ENCODE measurements at regions of chr14 and their contacts with region 1.

Region 1: DNA sequence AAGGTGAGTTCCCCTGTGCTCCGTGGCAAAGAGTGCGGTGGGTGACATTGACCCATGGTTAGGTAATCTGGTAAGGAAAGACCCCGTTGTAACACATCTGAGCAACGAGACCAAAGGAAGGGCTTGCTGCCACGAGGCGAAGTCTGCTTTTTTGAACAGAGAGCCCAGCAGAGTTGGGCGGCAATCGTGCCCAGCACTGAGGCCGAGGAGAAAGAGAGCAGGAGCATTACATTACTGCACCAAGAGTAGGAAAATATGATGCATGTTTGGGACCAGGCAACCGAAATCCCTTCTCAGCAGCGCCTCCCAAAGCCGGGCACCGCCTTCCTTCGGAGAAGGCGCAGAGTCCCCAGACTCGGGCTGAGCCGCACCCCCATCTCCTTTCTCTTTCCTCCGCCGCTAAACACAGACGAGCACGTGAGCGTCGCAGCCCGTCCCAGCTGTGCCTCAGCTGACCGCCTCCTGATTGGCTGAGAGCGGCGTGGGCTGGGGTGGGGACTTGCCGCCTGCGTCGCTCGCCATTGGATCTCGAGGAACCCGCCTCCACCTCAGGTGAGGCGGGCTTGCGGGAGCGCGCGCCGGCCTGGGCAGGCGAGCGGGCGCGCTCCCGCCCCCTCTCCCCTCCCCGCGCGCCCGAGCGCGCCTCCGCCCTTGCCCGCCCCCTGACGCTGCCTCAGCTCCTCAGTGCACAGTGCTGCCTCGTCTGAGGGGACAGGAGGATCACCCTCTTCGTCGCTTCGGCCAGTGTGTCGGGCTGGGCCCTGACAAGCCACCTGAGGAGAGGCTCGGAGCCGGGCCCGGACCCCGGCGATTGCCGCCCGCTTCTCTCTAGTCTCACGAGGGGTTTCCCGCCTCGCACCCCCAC is at the start of gene HIF1A:
- DNase-seq: peak; percentile 98
- H3K4me3 ChIP-seq: peak within 1 kb of the TSS; percentile 85
- H3K27ac ChIP-seq: peak within 1 kb of the TSS; percentile 93
- H3K4me1 ChIP-seq: peaks cover 28% of the 10 kb centered on the region
- H3K27me3 ChIP-seq: no peaks in the 10 kb centered on the region
- CTCF ChIP-seq: no peak
- total RNA-seq, gene HIF1A: 146 and 154 TPM in 2 replicates

Region 2: GRCh38 chr14:61512026-61512834 is 182.8 kb before region 1 on chr14:
- CTCF ChIA-PET with region 1: no interaction called
- POLR2A ChIA-PET with region 1: no interaction called
- intact Hi-C with region 1: loop called (anchors 1 kb)
- DNase-seq: peak in 1 of 2 experiments; percentile 24
- H3K4me3 ChIP-seq: no peak overlapping the region
- H3K27ac ChIP-seq: peak overlapping the region; percentile 30
- H3K4me1 ChIP-seq: peaks cover 54% of the 10 kb centered on the region
- H3K27me3 ChIP-seq: no peaks in the 10 kb centered on the region
- CTCF ChIP-seq: no peak

Region 3: DNA sequence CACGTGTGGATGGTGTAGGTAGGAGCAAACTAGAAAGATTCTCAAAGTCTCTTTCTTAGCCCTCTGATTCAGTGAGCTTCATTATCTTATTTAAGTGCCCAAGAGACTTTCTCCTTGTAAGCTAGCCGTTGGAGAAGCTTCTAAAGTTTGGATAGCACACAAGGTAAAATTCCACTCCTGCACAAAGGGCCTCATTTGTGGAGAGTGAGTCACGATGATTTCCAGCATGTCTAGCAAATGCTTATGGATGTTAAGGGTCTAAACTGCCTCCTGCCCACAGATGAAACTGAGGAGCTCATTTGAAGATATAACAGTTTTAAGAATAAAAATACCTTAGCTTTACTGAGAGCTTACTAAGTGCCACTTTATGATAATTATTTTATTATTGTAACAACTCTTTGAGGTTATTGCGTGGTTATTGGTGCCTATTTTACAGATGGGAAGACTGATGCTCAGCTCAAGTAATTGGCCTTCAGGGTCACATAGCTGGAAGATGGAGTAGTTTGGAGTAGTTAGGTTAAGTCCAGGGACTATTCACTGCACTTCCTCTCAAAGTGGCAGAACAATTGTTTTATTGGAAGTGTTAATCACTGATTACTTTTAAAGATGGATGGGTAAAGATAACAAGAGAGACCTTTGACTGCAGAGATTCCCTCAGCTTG is 78.4 kb before region 1 on chr14:
- CTCF ChIA-PET with region 1: no interaction called
- POLR2A ChIA-PET with region 1: no interaction called
- intact Hi-C with region 1: loop called (anchors 1 kb)
- DNase-seq: peak in 1 of 2 experiments; percentile 83
- H3K4me3 ChIP-seq: no peak overlapping the region
- H3K27ac ChIP-seq: peak overlapping the region; percentile 74
- H3K4me1 ChIP-seq: peaks cover 37% of the 10 kb centered on the region
- H3K27me3 ChIP-seq: no peaks in the 10 kb centered on the region
- CTCF ChIP-seq: no peak

Region 4: DNA sequence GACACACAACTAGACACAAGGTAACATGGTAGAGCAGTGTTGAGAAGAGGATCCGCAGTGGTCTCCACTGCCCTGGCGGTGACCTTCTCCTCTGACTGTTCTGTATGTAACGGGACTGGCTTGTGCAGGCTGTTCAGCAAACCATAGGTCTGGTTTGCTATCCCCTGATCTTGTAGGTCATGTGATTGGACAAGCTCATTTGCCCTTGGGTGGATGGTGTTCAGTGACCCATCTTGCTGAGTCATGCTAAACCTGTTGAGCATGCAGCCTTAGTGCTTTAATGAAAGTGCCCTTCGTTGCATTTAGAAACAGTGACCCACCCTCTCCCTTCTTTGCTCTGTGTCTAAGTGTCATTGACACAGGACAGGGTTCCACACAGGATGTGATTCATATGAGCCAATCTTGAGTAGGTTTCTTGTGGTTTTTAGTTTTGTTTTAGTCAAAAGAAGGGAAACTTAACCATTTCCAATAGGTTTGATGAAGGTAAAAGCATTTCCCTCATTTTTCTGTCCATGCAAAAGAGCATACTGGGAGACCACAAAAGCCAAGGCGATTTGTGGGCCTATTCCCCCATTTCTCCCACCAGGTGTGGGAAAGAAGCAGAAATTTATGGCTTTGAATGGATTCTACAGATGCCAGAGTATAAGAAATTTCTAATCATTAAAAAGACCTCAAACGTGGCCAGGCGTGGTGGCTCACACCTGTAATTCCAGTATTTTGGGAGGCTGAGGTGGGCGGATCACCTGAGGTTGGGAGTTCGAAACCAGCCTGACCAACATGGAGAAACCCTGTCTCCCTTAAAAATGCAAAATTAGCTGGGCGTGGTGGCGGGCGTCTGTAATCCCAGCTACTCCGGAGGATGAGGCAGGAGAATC is 32.4 kb before region 1 on chr14:
- CTCF ChIA-PET with region 1: no interaction called
- POLR2A ChIA-PET with region 1: no interaction called
- intact Hi-C with region 1: loop called (anchors 1 kb)
- DNase-seq: peak; percentile 69 to 90
- H3K4me3 ChIP-seq: peak overlapping the region; percentile 3; the same call in 1 of the 2 replicates
- H3K27ac ChIP-seq: peak overlapping the region; percentile 91
- H3K4me1 ChIP-seq: peaks cover 68% of the 10 kb centered on the region
- H3K27me3 ChIP-seq: no peaks in the 10 kb centered on the region
- CTCF ChIP-seq: no peak